Aorta (tissue), 5 donors: ENCODE measurements at regions of chr12 and their contacts with region 1.

Region 1: GRCh38 chr12:64946132-64946829 is 121.8 kb downstream of the TBC1D30 start:
- DNase-seq: peak in 1 of 2 donors; percentile 53
- ATAC-seq: peak; percentile 71
- H3K4me3 ChIP-seq: no peak overlapping the region
- H3K27ac ChIP-seq: no peak overlapping the region
- H3K4me1 ChIP-seq: peaks cover 0 to 2% of the 10 kb centered on the region in 2 donors
- H3K27me3 ChIP-seq: no peaks in the 10 kb centered on the region

Region 2: DNA sequence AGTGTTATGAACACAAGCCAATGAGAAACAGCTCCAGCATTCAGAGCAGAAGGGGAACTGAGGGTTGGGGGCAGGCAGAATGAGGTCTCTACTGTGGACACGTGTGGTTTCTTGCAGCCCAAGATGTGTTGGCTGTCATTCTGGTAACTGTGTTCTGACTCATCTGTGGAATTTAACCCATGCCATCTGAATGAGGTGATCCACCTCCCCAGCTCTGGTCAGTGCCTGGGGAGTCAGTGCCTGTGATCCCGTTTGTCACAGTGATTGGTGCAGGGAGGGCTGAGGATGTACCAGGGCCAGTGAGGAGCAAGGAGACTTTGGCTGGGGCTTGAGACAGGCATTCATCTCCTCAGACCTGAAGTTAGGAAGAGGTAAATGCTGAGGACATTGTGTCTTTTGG is 549.0 kb after region 1 on chr12:
- intact Hi-C with region 1: loop called in 1 of 2 experiments (anchors 10 kb)
- DNase-seq: no peak
- ATAC-seq: no peak
- H3K4me3 ChIP-seq: no peak overlapping the region
- H3K27ac ChIP-seq: no peak overlapping the region
- H3K4me1 ChIP-seq: peaks cover 0 to 2% of the 10 kb centered on the region in 2 donors
- H3K27me3 ChIP-seq: no peaks in the 10 kb centered on the region